A549 (cell line): ENCODE measurements at regions of chr17 and their contacts with region 1.

Region 1: GRCh38 chr17:44400226-44400847 is 10.9 kb upstream of the ITGA2B start:
- DNase-seq: peak; percentile 48
- ATAC-seq: peak; percentile 78 to 84; a peak in 5 of 6 replicates
- H3K4me3 ChIP-seq: no peak overlapping the region
- H3K27ac ChIP-seq: no peak overlapping the region
- H3K4me1 ChIP-seq: no peaks in the 10 kb centered on the region
- CTCF ChIP-seq: peak; percentile 75
- EP300 ChIP-seq: no peak
- POLR2A ChIP-seq: no peak
- RAD21 ChIP-seq: peak; percentile 59 to 63

Region 2: GRCh38 chr17:44363613-44364159 is 36.7 kb before region 1 on chr17 and contains the start of gene FAM171A2:
- CTCF ChIA-PET with region 1: interaction called, 24 read pairs
- POLR2A ChIA-PET with region 1: no interaction called
- DNase-seq: peak; percentile 66 to 74
- ATAC-seq: peak; percentile 76 to 83
- H3K4me3 ChIP-seq: peak within 1 kb of the TSS; percentile 77
- H3K27ac ChIP-seq: peak within 1 kb of the TSS; percentile 76 to 92
- H3K4me1 ChIP-seq: peaks cover 20% of the 10 kb centered on the region
- CTCF ChIP-seq: peak; percentile 98
- EP300 ChIP-seq: no peak
- POLR2A ChIP-seq: peak; percentile 36
- RAD21 ChIP-seq: peak in 1 of 2 experiments; percentile 42; a peak in 2 of 5 replicates
- polyA plus RNA-seq, gene FAM171A2: 1.8 and 2.7 TPM in 2 replicates

Region 3: GRCh38 chr17:44385287-44386181 is 14.8 kb before region 1 on chr17:
- CTCF ChIA-PET with region 1: interaction called, 62 read pairs
- POLR2A ChIA-PET with region 1: interaction called, 8 read pairs
- DNase-seq: peak; percentile 86 to 88
- ATAC-seq: peak; percentile 73 to 91
- H3K4me3 ChIP-seq: peak overlapping the region; percentile 54
- H3K27ac ChIP-seq: peak overlapping the region; percentile 73 to 86
- H3K4me1 ChIP-seq: peaks cover 3% of the 10 kb centered on the region; the same call in 1 of the 3 replicates
- CTCF ChIP-seq: peak; percentile 31; the same call in 2 of the 3 replicates
- EP300 ChIP-seq: no peak
- POLR2A ChIP-seq: peak; percentile 31
- RAD21 ChIP-seq: peak in 1 of 2 experiments; percentile 26; a peak in 2 of 5 replicates

Region 4: DNA sequence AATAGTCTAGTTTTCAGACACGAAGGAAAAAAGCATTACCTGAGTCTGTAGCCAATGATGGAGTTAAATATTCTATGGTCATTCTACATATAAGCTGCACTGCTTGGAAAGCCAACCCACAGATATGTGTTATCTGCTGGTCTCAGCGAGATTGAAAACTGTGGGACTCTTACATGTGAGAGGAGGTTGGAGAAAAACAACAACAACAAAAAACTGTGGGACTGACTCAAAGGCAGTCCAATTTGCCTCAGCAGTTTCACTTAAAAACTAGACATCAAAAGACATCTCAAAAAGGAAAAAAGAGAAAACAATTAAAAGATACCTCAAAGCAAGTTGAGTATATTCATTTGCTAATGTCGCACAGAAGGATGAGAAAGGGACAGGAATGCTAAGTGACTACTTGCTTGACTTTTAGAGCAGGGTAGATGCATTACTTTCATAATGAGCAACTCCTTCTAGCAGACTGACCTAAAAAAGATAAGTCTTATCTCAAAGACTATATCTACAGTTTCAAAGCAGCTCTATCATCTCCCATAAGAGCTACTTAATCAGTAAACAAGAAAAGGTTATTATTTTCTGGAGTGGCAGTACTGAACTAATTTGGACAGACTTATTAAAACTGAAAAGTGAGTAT is 24.6 kb after region 1 on chr17:
- CTCF ChIA-PET with region 1: interaction called, 37 read pairs
- POLR2A ChIA-PET with region 1: no interaction called
- DNase-seq: no peak
- ATAC-seq: no peak
- H3K4me3 ChIP-seq: no peak overlapping the region
- H3K27ac ChIP-seq: no peak overlapping the region
- H3K4me1 ChIP-seq: no peaks in the 10 kb centered on the region
- CTCF ChIP-seq: no peak
- EP300 ChIP-seq: no peak
- POLR2A ChIP-seq: no peak
- RAD21 ChIP-seq: no peak

Region 5: DNA sequence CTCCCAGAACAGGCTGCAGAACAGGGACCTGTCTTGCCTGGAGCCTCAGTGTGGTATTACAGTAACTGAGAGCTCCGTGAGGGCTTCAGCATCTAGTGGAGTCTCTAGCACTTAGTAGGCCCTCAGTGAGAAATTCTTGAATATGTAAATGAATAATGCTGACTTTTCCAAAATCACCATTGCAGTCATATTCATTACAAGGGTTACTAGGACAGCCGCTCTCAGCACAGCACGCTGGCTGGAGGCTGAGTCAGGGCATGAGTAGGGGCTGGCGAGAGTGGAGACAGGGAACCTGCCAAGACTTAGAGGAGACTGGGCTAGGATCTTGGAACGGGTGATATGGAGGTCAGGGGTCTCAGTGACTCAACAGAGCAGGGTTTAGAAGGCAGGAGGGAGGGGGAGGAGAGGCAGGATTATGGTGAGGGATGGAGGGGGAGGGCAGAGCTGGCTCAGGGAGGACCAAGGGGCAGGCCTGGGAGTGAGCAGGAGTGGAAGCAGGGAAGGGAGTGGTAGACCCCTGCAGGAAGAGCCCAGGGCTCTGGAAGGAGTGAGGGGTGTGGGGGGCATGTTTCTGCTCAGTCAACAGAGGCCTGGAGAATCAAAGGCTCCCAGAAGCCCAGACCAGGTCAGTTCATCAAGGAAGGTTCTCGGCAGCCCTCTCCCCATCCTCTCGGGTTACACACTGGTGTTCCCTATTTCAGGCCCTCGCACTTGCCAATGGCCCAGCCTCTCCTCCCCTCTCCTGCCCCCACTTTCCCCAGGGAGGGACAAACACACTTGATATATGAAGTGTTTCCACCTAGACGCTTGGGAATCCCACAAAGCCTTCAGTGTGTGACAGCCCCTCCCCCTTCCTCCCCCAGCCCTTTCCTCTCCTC is 199.2 kb after region 1 on chr17:
- CTCF ChIA-PET with region 1: no interaction called
- POLR2A ChIA-PET with region 1: no interaction called
- DNase-seq: peak; percentile 87 to 93
- ATAC-seq: peak; percentile 90 to 95
- H3K4me3 ChIP-seq: no peak overlapping the region
- H3K27ac ChIP-seq: peak overlapping the region; percentile 86 to 88
- H3K4me1 ChIP-seq: peaks cover 50% of the 10 kb centered on the region
- CTCF ChIP-seq: no peak
- EP300 ChIP-seq: no peak
- POLR2A ChIP-seq: no peak
- RAD21 ChIP-seq: peak; percentile 14 to 32; a peak in 4 of 5 replicates

Region 6: DNA sequence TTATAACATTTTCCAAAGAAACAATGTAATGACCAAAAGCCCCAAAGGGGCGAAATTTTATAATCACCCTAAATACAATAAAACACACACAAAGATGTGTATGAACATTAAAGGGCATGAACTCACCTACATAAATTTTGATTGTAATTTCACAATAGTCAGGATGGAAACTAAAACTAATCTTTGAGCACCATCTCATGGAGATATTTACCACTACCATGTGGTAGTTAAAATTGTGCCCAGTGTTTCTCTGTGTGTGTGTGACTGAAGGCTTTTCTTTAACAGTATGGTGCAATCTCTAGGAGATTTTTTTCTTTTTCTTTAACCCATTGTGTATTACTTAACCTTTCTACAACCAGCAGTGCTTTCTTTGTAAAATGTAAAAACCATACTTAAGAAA is 236.2 kb after region 1 on chr17:
- CTCF ChIA-PET with region 1: interaction called, 23 read pairs
- POLR2A ChIA-PET with region 1: no interaction called
- DNase-seq: peak; percentile 67 to 69
- ATAC-seq: peak; percentile 88 to 94
- H3K4me3 ChIP-seq: no peak overlapping the region
- H3K27ac ChIP-seq: peak overlapping the region in 1 of 2 experiments; percentile 1; a peak in 1 of 6 replicates
- H3K4me1 ChIP-seq: peaks cover 22% of the 10 kb centered on the region
- CTCF ChIP-seq: peak; percentile 97
- EP300 ChIP-seq: no peak
- POLR2A ChIP-seq: no peak
- RAD21 ChIP-seq: peak; percentile 99